CD8-positive, alpha-beta T cell (primary cell): ENCODE measurements at regions of chr7 and their contacts with region 1.

Region 1: GRCh38 chr7:142796608-142797385 is 26.0 kb downstream of the PRSS2 start:
- DNase-seq: peak in 3 of 9 experiments; percentile 34 to 83 (median 35)
- ATAC-seq: peak; percentile 4
- H3K4me3 ChIP-seq: peak overlapping the region; percentile 81
- H3K4me3 Mint-ChIP-seq: peak overlapping the region; percentile 99
- H3K27ac ChIP-seq: peak overlapping the region; percentile 99
- H3K27ac Mint-ChIP-seq: peak overlapping the region; percentile 100
- H3K4me1 ChIP-seq: peaks cover 63% of the 10 kb centered on the region
- H3K4me1 Mint-ChIP-seq: peaks cover 70% of the 10 kb centered on the region
- H3K27me3 ChIP-seq: no peaks in the 10 kb centered on the region
- H3K27me3 Mint-ChIP-seq: no peaks in the 10 kb centered on the region
- CTCF ChIP-seq: no peak

Region 2: DNA sequence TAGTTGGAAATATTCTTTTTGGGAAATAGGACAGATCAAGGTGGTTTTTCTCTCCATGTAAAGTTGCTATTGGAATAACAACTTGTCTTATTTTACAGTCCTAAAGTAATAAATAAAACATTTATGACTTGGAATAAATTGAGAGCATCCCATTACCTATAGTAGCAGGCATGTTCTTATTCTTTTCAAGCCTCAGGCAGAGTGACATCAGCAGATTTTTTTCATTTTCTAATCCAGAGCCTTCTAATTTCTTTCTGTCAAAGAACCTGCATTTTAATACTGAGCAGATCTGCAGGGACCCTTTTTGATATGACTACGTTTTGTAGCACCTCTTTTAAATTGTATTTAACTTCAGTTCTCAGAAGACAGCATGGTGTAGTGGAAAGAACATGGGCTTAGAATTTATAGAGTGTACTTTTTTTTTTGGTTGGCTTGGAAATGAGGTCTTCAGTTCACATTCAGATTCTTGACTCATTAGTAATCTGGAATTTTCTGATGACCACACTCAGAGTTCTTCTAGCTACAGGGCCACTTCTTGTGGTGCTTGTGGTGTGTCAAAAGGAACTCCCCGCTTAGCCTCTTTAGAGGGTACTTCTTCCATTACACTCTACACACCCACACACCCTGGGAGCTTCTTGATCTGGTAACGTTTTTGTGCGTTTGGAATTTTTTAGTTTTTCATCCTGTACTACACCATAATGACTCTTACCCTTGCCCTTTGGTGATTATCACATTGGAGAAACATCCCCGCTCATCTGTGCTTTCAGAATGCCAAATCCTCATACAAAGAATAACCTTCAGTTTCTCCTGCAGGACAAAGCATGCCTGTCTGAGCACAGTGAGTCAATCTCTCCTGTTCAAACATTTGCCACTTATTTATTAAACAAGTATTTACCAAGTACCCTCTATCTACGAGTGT is 1210.9 kb before region 1 on chr7:
- CTCF ChIA-PET with region 1: no interaction called
- POLR2A ChIA-PET with region 1: no interaction called
- intact Hi-C with region 1: no loop called
- DNase-seq: peak in 2 of 9 experiments; percentile 12 to 43
- ATAC-seq: no peak
- H3K4me3 ChIP-seq: no peak overlapping the region
- H3K4me3 Mint-ChIP-seq: no peak overlapping the region
- H3K27ac ChIP-seq: peak overlapping the region in 1 of 2 experiments; percentile 7
- H3K27ac Mint-ChIP-seq: peak overlapping the region; percentile 28
- H3K4me1 ChIP-seq: no peaks in the 10 kb centered on the region
- H3K4me1 Mint-ChIP-seq: peaks cover 39% of the 10 kb centered on the region
- H3K27me3 ChIP-seq: no peaks in the 10 kb centered on the region
- H3K27me3 Mint-ChIP-seq: no peaks in the 10 kb centered on the region
- CTCF ChIP-seq: no peak

Region 3: DNA sequence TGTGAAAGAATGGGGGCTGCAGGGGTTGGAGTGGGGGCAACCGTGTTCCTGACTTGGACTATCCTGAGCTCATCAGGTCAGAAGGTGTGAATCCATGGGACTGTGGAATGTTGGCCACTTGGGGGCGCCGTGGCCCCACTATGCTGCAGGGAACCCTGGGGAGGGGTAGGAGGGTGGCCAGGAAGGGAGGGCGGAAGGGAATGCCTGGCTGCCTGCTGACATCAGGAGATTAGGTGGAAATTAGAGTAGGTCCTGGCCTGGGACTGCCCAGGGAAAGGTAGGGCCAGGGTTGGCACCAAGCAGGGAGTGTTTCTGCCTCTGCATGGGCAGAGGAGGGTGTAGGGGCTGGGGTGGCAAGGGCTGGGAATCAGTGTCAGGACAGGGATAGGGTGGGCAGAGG is 473.1 kb before region 1 on chr7:
- CTCF ChIA-PET with region 1: no interaction called
- POLR2A ChIA-PET with region 1: interaction called, 15 read pairs
- intact Hi-C with region 1: no loop called
- DNase-seq: peak in 5 of 9 experiments; percentile 49 to 65 (median 52)
- ATAC-seq: peak; percentile 47
- H3K4me3 ChIP-seq: no peak overlapping the region
- H3K4me3 Mint-ChIP-seq: no peak overlapping the region
- H3K27ac ChIP-seq: no peak overlapping the region
- H3K27ac Mint-ChIP-seq: peak overlapping the region; percentile 86
- H3K4me1 ChIP-seq: peaks cover 8% of the 10 kb centered on the region
- H3K4me1 Mint-ChIP-seq: peaks cover 27% of the 10 kb centered on the region
- H3K27me3 ChIP-seq: no peaks in the 10 kb centered on the region
- H3K27me3 Mint-ChIP-seq: peaks cover 7% of the 10 kb centered on the region
- CTCF ChIP-seq: peak; percentile 51

Region 4: GRCh38 chr7:142438235-142438922 is 358.4 kb before region 1 on chr7:
- CTCF ChIA-PET with region 1: no interaction called
- POLR2A ChIA-PET with region 1: interaction called, 18 read pairs
- intact Hi-C with region 1: no loop called
- DNase-seq: peak in 2 of 9 experiments; percentile 44 to 58
- ATAC-seq: no peak
- H3K4me3 ChIP-seq: no peak overlapping the region
- H3K4me3 Mint-ChIP-seq: no peak overlapping the region
- H3K27ac ChIP-seq: no peak overlapping the region
- H3K27ac Mint-ChIP-seq: no peak overlapping the region
- H3K4me1 ChIP-seq: peaks cover 12% of the 10 kb centered on the region
- H3K4me1 Mint-ChIP-seq: peaks cover 50% of the 10 kb centered on the region
- H3K27me3 ChIP-seq: no peaks in the 10 kb centered on the region
- H3K27me3 Mint-ChIP-seq: no peaks in the 10 kb centered on the region
- CTCF ChIP-seq: peak; percentile 42

Region 5: GRCh38 chr7:142615508-142615907 is 181.3 kb before region 1 on chr7:
- CTCF ChIA-PET with region 1: interaction called, 3 read pairs
- POLR2A ChIA-PET with region 1: interaction called, 28 read pairs
- intact Hi-C with region 1: no loop called
- DNase-seq: peak in 1 of 9 experiments; percentile 19
- ATAC-seq: no peak
- H3K4me3 ChIP-seq: peak overlapping the region in 1 of 2 experiments; percentile 1
- H3K4me3 Mint-ChIP-seq: peak overlapping the region; percentile 66
- H3K27ac ChIP-seq: no peak overlapping the region
- H3K27ac Mint-ChIP-seq: peak overlapping the region; percentile 80
- H3K4me1 ChIP-seq: no peaks in the 10 kb centered on the region
- H3K4me1 Mint-ChIP-seq: peaks cover 4% of the 10 kb centered on the region
- H3K27me3 ChIP-seq: no peaks in the 10 kb centered on the region
- H3K27me3 Mint-ChIP-seq: peaks cover 2% of the 10 kb centered on the region
- CTCF ChIP-seq: no peak

Region 6: GRCh38 chr7:142711746-142712619 is 84.8 kb before region 1 on chr7:
- CTCF ChIA-PET with region 1: interaction called, 6 read pairs
- POLR2A ChIA-PET with region 1: interaction called, 30 read pairs
- intact Hi-C with region 1: no loop called
- DNase-seq: peak in 6 of 9 experiments; percentile 26 to 74 (median 46)
- ATAC-seq: peak; percentile 76
- H3K4me3 ChIP-seq: peak overlapping the region; percentile 42 to 64
- H3K4me3 Mint-ChIP-seq: peak overlapping the region; percentile 89
- H3K27ac ChIP-seq: peak overlapping the region; percentile 56 to 70
- H3K27ac Mint-ChIP-seq: peak overlapping the region; percentile 95
- H3K4me1 ChIP-seq: peaks cover 46% of the 10 kb centered on the region
- H3K4me1 Mint-ChIP-seq: peaks cover 58% of the 10 kb centered on the region
- H3K27me3 ChIP-seq: no peaks in the 10 kb centered on the region
- H3K27me3 Mint-ChIP-seq: no peaks in the 10 kb centered on the region
- CTCF ChIP-seq: peak; percentile 38